ENCODE measurements at regions of chr15 and their contacts with region 1.

Region 1: GRCh38 chr15:90931737-90932659 is at the start of gene HDDC3:
- H3K4me3 Mint-ChIP-seq: peak within 1 kb of the TSS; percentile 85
- H3K27ac Mint-ChIP-seq: peak within 1 kb of the TSS; percentile 97
- H3K4me1 Mint-ChIP-seq: peaks cover 64% of the 10 kb centered on the region
- H3K27me3 Mint-ChIP-seq: no peaks in the 10 kb centered on the region

Region 2: DNA sequence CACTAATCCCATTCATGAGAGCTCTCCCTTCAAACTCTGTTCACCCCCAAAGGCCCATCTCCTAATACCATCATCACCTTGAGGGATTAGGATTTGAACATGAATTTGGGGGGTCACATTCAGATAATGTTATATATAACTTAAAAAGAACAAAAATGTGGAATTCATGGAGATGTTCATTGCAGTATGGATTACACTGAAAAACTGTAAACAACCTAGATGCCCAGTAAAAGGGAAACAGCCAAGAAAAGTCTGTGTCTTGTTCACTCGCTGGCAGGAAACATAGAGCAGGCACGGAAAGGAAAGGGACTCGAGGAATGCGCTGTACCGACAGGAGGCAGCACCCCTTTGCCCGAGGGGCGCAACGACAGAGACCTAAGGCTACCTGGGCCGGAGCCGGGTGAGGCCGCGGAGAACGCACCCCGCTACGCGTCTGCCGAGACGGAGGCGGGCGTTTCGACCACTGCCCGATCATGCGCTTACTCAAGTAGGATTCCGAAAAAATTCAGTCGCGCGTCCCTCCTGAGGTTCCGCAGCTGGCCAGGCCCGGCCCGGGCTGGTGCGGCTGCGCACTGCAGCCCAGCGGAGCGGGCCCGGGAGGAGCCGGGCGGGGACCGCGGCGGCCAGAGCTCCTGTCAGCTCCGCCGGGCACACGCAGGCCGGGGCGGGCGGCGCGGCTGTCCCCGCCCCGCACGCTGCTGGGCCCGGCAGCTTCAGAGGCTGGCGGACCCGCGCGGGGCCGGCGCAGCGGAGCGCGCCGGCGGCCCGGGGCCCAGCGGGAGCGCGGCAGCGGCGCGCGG is 29.8 kb before region 1 on chr15:
- intact Hi-C with region 1: loop called (anchors 2 kb)
- H3K4me3 Mint-ChIP-seq: peak overlapping the region; percentile 76
- H3K27ac Mint-ChIP-seq: peak overlapping the region; percentile 92
- H3K4me1 Mint-ChIP-seq: peaks cover 64% of the 10 kb centered on the region
- H3K27me3 Mint-ChIP-seq: no peaks in the 10 kb centered on the region

Region 3: GRCh38 chr15:90915808-90916440 is 16.1 kb before region 1 on chr15:
- intact Hi-C with region 1: loop called (anchors 2 kb)
- H3K4me3 Mint-ChIP-seq: peak overlapping the region; percentile 35
- H3K27ac Mint-ChIP-seq: peak overlapping the region; percentile 78
- H3K4me1 Mint-ChIP-seq: peaks cover 61% of the 10 kb centered on the region
- H3K27me3 Mint-ChIP-seq: no peaks in the 10 kb centered on the region

Region 4: DNA sequence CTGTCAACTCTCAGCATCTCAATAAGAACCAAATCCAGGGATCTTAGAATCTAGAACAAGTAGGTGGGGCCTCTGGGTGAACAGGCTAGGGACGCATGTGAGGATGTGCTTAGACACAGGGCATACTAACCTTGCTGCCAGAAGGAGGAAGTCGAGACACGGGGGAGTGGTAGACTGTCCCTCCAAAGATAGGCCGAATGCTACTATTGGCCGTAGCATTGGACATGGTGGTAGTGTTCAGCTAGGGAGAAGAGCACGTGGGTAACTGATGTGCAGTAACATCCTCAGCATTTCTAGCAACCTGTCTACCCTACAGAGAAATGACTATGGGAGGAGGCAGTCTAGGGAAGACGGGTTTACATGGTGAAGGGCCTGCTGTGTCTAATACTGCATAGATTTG is 38.3 kb after region 1 on chr15:
- intact Hi-C with region 1: no loop called
- H3K4me3 Mint-ChIP-seq: no peak overlapping the region
- H3K27ac Mint-ChIP-seq: no peak overlapping the region
- H3K4me1 Mint-ChIP-seq: no peaks in the 10 kb centered on the region
- H3K27me3 Mint-ChIP-seq: no peaks in the 10 kb centered on the region